Activated B cell treated with CpG ODN at 0.5 μM for 24 hours (primary cell): ENCODE measurements at regions of chr11 and their contacts with region 1.

Region 1: DNA sequence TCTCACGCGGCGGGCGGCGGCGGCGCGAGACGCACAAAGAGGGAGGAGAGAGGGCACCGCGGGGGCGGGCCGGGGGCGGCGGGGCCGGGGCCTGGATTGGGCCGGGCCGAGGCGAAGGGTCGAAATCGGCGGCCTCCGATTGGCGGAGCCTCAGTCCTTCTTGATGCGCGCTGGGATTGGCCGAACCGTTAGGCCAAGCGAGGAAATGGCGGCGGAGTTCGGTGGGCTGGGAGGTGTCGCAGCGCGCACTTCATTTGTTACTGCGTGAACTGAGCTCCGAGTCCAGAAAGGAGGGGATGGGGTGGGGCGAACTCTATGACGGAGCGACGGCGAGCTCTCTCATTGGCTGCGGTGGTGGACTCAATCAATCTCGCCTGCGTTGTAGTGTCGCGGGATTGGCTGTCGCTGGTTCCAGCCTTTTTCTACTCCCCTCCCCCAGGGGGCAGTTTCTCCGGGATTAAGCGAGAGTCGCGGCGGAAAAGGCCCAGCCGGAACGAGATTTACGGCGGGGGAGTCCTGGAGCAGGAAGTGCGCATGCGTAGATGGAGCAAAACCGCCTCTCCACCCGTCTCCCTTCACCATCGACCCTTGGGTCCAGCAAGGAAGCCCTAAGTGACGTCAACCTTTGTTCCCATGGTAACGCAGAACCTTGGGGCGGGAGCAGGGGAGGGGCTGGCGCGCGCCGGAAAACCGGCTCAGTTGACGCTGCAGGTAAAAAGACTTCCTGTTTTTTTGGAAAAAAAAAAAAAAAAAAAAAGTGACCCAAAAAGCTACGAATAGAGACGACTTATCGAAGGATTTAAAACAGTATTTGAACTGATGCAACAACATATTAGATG is at the start of gene SF1:
- DNase-seq: peak; percentile 91
- ATAC-seq: peak; percentile 81
- H3K4me3 Mint-ChIP-seq: peak within 1 kb of the TSS; percentile 90
- H3K27ac Mint-ChIP-seq: peak within 1 kb of the TSS; percentile 99
- H3K4me1 Mint-ChIP-seq: peaks cover 75% of the 10 kb centered on the region
- H3K27me3 Mint-ChIP-seq: no peaks in the 10 kb centered on the region
- CTCF ChIP-seq: no peak
- total RNA-seq, gene SF1: 640 and 687 TPM in 2 replicates

Region 2: DNA sequence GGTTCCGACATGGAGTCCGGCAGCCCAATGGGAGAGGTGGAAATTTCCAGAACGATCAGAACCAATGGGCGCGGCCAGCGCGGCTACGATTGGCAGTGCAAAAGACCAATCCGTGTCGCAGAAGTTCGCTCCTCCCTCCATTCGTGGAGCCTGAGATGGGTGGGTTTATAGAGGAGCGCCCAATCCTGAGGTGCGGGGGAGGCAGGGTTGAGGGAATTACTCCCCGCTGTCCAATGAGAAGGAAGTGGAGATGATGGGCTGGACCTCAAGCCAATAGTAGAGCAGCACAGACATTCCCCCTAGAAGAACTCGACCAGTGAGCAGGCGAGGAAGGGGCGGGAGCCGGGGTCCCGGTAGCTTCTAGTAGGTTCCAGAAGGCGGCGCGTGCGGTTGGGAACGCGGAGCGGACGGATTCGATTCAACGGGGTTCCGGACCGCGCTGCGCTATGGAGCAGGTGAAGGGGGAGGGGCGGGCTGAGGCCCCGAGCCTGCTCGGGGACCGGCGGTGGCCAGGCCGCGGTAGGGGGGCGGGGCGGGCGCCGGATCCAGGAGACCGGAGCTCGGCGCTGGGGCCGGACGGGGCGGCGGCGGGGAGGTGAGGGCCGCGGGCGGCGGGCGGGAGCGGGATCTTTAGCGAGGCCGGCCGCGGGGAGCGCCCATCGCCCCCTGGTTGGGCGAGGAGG is 592.8 kb before region 1 on chr11 and contains the start of gene STIP1:
- CTCF ChIA-PET with region 1: no interaction called
- POLR2A ChIA-PET with region 1: no interaction called
- intact Hi-C with region 1: no loop called
- DNase-seq: peak; percentile 93
- ATAC-seq: peak; percentile 87
- H3K4me3 Mint-ChIP-seq: no peak within 1 kb of the TSS
- H3K27ac Mint-ChIP-seq: peak within 1 kb of the TSS; percentile 97
- H3K4me1 Mint-ChIP-seq: peaks cover 27% of the 10 kb centered on the region
- H3K27me3 Mint-ChIP-seq: no peaks in the 10 kb centered on the region
- CTCF ChIP-seq: no peak
- total RNA-seq, gene STIP1: 155 and 159 TPM in 2 replicates

Region 3: DNA sequence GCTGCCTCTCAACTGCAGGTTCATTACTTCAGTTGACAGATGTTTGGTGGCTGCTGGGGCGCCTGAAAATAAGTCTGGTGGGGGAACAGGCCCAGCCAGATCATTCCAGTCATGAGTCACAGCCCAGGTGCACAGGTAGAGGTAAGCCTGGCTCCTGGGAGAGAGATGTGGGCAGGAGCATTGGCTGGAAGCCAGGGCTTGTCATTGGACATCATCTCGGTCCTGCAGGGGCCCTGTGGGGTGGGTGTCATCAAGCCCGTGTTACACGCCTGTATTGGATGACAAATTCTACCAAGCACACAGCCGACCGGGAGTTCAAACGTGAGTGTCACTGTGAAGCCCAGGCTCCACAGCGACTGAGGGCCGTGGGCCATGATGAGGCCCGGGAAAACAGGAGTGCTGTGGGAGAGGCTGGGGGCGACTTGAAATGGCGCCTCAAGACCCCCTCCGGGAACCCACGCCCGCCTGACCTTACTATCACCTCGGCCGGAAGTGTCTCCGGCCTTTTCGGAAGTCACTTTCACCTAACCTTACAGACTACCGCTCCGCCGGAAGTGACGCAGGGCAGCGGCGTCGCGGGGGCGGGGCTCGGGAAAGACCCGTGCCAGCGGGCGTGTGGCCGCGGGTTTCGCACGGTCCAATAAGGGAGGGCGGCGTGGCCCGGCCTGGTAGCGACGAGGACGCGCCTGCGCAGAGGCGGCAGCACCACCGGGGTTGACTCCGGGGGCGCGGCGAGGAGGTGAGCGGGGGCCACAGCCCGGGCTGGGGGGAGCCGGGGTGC is 538.1 kb before region 1 on chr11 and contains the start of gene FKBP2:
- CTCF ChIA-PET with region 1: no interaction called
- POLR2A ChIA-PET with region 1: interaction called, 7 read pairs
- intact Hi-C with region 1: loop called (anchors 10 kb)
- DNase-seq: peak; percentile 98
- ATAC-seq: peak; percentile 61
- H3K4me3 Mint-ChIP-seq: peak within 1 kb of the TSS; percentile 91
- H3K27ac Mint-ChIP-seq: peak within 1 kb of the TSS; percentile 98
- H3K4me1 Mint-ChIP-seq: peaks cover 75% of the 10 kb centered on the region
- H3K27me3 Mint-ChIP-seq: no peaks in the 10 kb centered on the region
- CTCF ChIP-seq: no peak
- total RNA-seq, gene FKBP2: 31.4 and 39.4 TPM in 2 replicates

Region 4: DNA sequence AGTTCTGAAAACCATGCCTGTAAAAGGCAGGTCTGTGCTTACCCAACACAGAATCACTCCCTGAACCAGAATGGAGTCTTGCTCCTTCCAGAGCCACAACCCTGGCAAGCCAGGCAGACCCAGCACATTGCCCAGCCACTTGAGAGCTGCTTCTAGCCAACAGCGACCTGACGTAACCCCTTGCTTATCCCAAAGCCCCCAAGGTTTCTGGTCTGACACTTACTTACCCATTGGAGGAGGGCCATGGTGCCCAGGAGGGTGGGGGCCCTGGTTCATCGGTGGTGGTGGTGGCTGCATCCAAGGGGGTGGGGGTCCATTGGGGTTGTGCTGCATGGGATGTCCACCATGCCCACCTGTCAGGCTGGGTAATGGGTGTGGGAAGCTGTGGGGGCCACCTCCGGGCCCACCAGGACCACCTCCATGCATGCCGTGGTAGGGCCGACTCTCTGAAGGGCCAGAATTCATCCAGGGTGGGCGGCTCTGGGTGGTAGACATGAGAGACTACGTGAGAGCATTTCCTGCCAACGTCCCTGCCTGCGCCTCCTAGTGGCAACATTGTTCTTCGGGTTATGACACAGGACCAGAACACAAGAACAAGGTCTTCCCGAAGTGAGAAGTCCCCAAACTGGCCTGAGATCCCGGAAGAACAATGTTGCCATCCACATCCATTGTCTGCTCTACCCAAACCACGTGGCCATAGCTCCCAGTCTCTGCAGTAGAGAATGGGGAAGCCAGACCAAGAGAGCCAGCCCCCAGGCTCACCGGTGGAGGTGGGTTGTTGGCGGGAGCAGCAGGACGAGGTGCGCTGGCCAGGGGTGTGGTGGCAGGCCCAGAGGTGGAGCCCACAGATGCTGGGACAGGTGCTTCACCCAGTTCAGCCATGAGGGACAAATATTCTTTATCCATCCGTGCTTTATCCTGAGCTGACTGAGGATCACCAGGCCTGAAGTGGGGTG is 11.1 kb before region 1 on chr11:
- CTCF ChIA-PET with region 1: interaction called, 11 read pairs
- POLR2A ChIA-PET with region 1: interaction called, 74 read pairs
- intact Hi-C with region 1: loop called (anchors 2 kb)
- DNase-seq: peak; percentile 60
- ATAC-seq: no peak
- H3K4me3 Mint-ChIP-seq: peak overlapping the region; percentile 11
- H3K27ac Mint-ChIP-seq: peak overlapping the region; percentile 85
- H3K4me1 Mint-ChIP-seq: peaks cover 91% of the 10 kb centered on the region
- H3K27me3 Mint-ChIP-seq: no peaks in the 10 kb centered on the region
- CTCF ChIP-seq: peak; percentile 82

Region 5: GRCh38 chr11:64810271-64810890 is 31.7 kb after region 1 on chr11 and contains the start of gene MEN1:
- CTCF ChIA-PET with region 1: no interaction called
- POLR2A ChIA-PET with region 1: interaction called, 11 read pairs
- intact Hi-C with region 1: loop called (anchors 2 kb)
- DNase-seq: peak; percentile 78
- ATAC-seq: peak; percentile 87
- H3K4me3 Mint-ChIP-seq: peak within 1 kb of the TSS; percentile 96
- H3K27ac Mint-ChIP-seq: peak within 1 kb of the TSS; percentile 85
- H3K4me1 Mint-ChIP-seq: peaks cover 36% of the 10 kb centered on the region
- H3K27me3 Mint-ChIP-seq: no peaks in the 10 kb centered on the region
- CTCF ChIP-seq: no peak
- total RNA-seq, gene MEN1: 35.1 and 44.6 TPM in 2 replicates

Region 6: GRCh38 chr11:64878494-64879243 is 99.9 kb after region 1 on chr11 and contains the start of gene EHD1:
- CTCF ChIA-PET with region 1: no interaction called
- POLR2A ChIA-PET with region 1: interaction called, 26 read pairs
- intact Hi-C with region 1: loop called (anchors 2 kb)
- DNase-seq: peak; percentile 98
- ATAC-seq: peak; percentile 81
- H3K4me3 Mint-ChIP-seq: peak within 1 kb of the TSS; percentile 97
- H3K27ac Mint-ChIP-seq: peak within 1 kb of the TSS; percentile 95
- H3K4me1 Mint-ChIP-seq: peaks cover 57% of the 10 kb centered on the region
- H3K27me3 Mint-ChIP-seq: no peaks in the 10 kb centered on the region
- CTCF ChIP-seq: no peak
- total RNA-seq, gene EHD1: 357 and 360 TPM in 2 replicates

Region 7: DNA sequence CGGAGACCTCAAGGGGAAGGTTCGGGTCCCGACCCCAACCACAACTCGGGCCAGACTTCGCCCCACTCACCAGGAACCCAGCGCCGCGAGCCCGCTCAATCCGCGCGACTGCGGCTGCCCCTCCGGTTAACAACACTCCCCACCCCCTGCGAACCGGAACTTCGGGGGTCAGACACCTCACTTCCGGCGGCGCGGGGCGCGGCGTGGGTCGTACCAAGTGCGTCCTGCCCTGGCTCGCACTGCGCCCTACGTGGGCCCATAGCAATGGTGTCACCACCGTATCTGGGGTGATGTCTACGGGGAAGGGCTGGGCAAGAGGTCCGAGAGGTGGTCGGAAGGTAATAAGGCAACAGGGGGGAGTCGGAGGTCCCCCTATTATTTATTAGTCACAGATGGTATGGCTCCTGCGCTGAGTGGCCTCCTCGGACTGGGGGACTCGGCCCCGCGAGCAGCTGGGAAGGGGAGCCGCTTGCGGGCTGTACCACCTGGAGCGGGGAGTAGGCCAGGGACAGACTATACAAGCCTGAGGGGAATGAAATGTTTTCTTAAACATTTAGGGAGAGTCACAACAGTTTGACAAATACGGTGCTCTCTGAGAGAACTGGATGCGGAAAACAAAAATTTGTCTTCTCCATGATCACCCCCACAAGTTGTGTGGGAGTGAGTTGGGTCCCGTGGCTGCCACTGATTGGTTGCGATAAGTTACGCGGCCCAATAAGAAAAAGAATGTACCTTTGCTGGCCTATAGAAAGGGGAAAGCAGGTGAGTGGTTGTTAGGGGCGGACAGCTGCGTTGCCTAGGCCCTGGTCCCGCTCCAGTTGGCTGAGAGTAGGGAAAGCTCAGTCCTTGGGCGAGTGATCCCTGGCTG is 355.9 kb after region 1 on chr11 and contains the start of gene SYVN1:
- CTCF ChIA-PET with region 1: no interaction called
- POLR2A ChIA-PET with region 1: interaction called, 11 read pairs
- intact Hi-C with region 1: loop called (anchors 5 kb)
- DNase-seq: peak; percentile 92
- ATAC-seq: peak; percentile 60
- H3K4me3 Mint-ChIP-seq: peak within 1 kb of the TSS; percentile 99
- H3K27ac Mint-ChIP-seq: peak within 1 kb of the TSS; percentile 99
- H3K4me1 Mint-ChIP-seq: peaks cover 64% of the 10 kb centered on the region
- H3K27me3 Mint-ChIP-seq: no peaks in the 10 kb centered on the region
- CTCF ChIP-seq: no peak
- total RNA-seq, gene SYVN1: 232 and 238 TPM in 2 replicates